Activated CD4-positive, alpha-beta memory T cell treated with anti-CD3 and anti-CD28 coated beads for 36 hours (primary cell): ENCODE measurements at regions of chr4 and their contacts with region 1.

Region 1: GRCh38 chr4:89158884-89159503 is 47.7 kb downstream of the TIGD2 start:
- DNase-seq: no peak
- H3K4me3 Mint-ChIP-seq: no peak overlapping the region
- H3K27ac Mint-ChIP-seq: no peak overlapping the region
- H3K4me1 Mint-ChIP-seq: no peaks in the 10 kb centered on the region
- H3K27me3 Mint-ChIP-seq: peaks cover 5% of the 10 kb centered on the region

Region 2: GRCh38 chr4:89101256-89102161 is 57.5 kb before region 1 on chr4:
- CTCF ChIA-PET with region 1: no interaction called
- POLR2A ChIA-PET with region 1: no interaction called
- intact Hi-C with region 1: no loop called
- DNase-seq: no peak
- H3K4me3 Mint-ChIP-seq: no peak overlapping the region
- H3K27ac Mint-ChIP-seq: peak overlapping the region; percentile 41
- H3K4me1 Mint-ChIP-seq: peaks cover 14% of the 10 kb centered on the region
- H3K27me3 Mint-ChIP-seq: peaks cover 7% of the 10 kb centered on the region

Region 3: GRCh38 chr4:89434364-89434988 is 275.5 kb after region 1 on chr4:
- CTCF ChIA-PET with region 1: interaction called, 4 read pairs
- POLR2A ChIA-PET with region 1: no interaction called
- intact Hi-C with region 1: loop called (anchors 1 kb)
- DNase-seq: no peak
- H3K4me3 Mint-ChIP-seq: no peak overlapping the region
- H3K27ac Mint-ChIP-seq: no peak overlapping the region
- H3K4me1 Mint-ChIP-seq: peaks cover 12% of the 10 kb centered on the region
- H3K27me3 Mint-ChIP-seq: no peaks in the 10 kb centered on the region